AG04449 (cell line): ENCODE measurements at regions of chr6 and their contacts with region 1.

Region 1: GRCh38 chr6:151323791-151324487 is 67.4 kb downstream of the ZBTB2 start:
- DNase-seq: peak; percentile 71
- H3K4me3 ChIP-seq: no peak overlapping the region
- CTCF ChIP-seq: peak; percentile 96

Region 2: GRCh38 chr6:150902142-150902776 is 421.7 kb before region 1 on chr6:
- CTCF ChIA-PET with region 1: interaction called, 156 read pairs
- POLR2A ChIA-PET with region 1: no interaction called
- DNase-seq: no peak
- H3K4me3 ChIP-seq: no peak overlapping the region
- CTCF ChIP-seq: no peak

Region 3: GRCh38 chr6:151004415-151005024 is 319.4 kb before region 1 on chr6:
- CTCF ChIA-PET with region 1: interaction called, 573 read pairs
- POLR2A ChIA-PET with region 1: no interaction called
- DNase-seq: peak; percentile 72
- H3K4me3 ChIP-seq: no peak overlapping the region
- CTCF ChIP-seq: no peak

Region 4: GRCh38 chr6:151067684-151068596 is 256.0 kb before region 1 on chr6:
- CTCF ChIA-PET with region 1: interaction called, 11 read pairs
- POLR2A ChIA-PET with region 1: no interaction called
- DNase-seq: peak; percentile 95
- H3K4me3 ChIP-seq: no peak overlapping the region; the same call in 1 of the 2 replicates
- CTCF ChIP-seq: no peak

Region 5: DNA sequence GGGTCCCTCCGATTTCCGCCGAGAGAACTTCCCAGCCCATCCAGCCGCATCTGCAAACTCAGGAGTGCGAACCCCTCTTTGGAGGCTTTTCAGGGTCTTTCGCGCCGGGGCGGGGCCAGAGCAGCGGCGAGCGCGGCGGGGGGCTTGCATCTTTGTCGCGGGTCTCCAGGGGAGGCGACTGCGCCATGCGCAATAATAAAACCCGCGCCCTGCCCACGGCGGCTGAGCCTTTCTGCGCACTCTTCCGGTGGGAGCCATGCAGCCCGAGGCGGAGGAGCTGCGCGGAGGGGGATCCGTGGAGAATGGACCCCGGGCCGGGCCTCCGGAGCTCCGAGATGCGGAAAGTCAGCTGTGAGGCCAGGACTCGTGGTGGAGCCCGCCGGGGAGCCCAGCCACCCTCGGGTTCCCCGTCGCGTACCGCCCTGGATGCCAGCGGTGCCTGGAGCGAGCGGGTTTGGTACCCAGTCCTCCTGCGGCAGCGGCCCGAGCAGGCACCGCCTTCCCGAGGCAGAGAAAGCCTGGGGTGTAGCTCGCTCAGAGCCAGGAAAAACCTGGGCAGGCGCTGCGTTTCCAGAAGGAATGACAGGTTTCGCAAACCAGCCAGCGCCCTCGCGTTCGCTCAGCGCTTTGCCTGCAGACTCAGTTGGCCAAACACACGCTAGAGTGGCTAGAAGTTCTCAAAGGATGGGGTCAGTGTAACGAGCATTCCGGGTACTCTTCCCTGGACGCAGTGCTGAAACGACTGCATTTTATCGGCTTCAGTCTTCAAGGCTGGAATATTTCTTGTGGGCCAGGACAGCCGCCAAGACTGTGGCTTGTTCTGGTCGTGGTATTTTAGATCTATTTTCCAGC is 82.9 kb before region 1 on chr6:
- CTCF ChIA-PET with region 1: interaction called, 19 read pairs
- POLR2A ChIA-PET with region 1: interaction called, 8 read pairs
- DNase-seq: no peak
- H3K4me3 ChIP-seq: peak overlapping the region; percentile 86
- CTCF ChIP-seq: no peak

Region 6: DNA sequence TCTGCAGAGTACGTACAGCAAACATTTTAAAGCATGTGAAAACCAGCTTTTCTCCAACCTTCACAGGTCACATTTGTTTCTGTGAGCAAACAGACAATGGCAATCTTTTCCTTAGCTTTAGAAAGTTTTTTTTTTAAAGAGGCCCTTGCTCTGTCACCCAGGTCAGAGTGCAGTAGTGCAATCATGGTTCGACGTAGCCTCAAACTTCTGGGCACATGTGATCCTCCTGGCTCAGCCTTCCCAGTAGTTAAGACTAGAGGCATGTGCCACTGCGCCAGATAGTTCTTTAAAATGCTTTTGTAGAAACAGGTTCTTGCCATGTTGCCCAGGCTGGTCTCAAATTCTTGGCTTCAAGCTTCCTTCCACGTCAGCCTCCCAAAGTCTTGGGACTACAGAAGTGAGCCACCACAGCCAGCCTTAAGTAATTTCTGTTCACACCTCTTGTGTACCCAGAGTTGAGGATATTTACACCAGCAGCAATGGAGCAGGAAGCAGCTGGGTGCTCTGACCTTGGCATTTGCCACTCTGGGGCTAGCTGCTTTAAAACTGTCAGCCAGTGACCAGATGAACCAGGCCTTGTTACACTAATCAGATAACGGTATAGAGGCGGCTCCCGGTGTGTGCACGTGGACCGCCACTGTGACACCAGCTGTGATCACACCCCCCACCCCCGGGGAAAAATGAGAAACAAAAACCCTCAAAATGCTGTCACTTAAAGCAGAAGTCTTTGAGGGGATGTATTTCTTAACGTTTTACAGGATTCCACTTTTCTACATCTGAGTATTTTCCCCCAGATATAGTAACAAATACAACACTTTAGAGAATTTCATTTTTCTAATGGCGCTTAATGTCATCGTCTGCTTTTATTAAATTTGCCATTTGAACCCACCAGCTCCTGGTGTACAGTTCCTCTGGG is 12.8 kb before region 1 on chr6:
- CTCF ChIA-PET with region 1: interaction called, 17 read pairs
- POLR2A ChIA-PET with region 1: no interaction called
- DNase-seq: no peak
- H3K4me3 ChIP-seq: no peak overlapping the region
- CTCF ChIP-seq: no peak